CD8-positive, alpha-beta T cell (primary cell): ENCODE measurements at regions of chr2 and their contacts with region 1.

Region 1: DNA sequence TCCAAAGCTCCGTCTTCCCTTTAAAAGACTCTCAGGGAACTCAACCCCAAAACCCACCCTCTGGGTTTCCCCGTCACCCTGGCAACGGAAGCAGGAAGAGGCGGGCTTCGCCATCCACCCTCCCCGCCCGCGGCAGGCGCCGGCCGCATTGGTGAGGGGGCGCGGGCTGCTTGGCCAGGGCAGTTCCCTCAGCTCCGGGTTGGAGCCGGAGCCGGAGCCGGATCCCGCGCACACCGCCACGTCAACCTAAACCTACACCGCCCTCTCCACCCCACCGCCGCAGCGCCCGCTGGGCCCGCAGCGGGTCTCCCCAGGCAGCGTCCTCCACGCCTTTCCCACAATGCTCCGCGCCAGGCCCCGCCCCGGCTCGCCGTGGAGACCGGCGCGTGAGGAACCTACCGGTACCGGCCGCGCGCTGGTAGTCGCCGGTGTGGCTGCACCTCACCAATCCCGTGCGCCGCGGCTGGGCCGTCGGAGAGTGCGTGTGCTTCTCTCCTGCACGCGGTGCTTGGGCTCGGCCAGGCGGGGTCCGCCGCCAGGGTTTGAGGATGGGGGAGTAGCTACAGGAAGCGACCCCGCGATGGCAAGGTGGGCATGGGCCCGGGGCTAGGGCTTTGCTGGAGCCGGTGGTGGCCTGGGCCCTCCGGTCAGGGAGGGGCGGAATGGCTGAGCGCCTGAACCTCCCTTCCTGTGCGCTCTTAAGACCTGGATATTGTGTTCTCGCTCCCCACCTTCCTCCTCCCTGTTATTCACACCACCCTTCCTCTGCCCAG is at the start of gene DNAJC10:
- DNase-seq: peak; percentile 66 to 93 (median 85)
- ATAC-seq: peak; percentile 81
- H3K4me3 ChIP-seq: peak within 1 kb of the TSS; percentile 70 to 85
- H3K4me3 Mint-ChIP-seq: no peak within 1 kb of the TSS
- H3K27ac ChIP-seq: peak within 1 kb of the TSS; percentile 59 to 65
- H3K27ac Mint-ChIP-seq: no peak within 1 kb of the TSS
- H3K4me1 ChIP-seq: peaks cover 21% of the 10 kb centered on the region
- H3K4me1 Mint-ChIP-seq: peaks cover 3% of the 10 kb centered on the region
- H3K27me3 ChIP-seq: no peaks in the 10 kb centered on the region
- H3K27me3 Mint-ChIP-seq: peaks cover 5% of the 10 kb centered on the region
- CTCF ChIP-seq: no peak
- total RNA-seq, gene DNAJC10: 27.5 to 27.9 TPM

Region 2: DNA sequence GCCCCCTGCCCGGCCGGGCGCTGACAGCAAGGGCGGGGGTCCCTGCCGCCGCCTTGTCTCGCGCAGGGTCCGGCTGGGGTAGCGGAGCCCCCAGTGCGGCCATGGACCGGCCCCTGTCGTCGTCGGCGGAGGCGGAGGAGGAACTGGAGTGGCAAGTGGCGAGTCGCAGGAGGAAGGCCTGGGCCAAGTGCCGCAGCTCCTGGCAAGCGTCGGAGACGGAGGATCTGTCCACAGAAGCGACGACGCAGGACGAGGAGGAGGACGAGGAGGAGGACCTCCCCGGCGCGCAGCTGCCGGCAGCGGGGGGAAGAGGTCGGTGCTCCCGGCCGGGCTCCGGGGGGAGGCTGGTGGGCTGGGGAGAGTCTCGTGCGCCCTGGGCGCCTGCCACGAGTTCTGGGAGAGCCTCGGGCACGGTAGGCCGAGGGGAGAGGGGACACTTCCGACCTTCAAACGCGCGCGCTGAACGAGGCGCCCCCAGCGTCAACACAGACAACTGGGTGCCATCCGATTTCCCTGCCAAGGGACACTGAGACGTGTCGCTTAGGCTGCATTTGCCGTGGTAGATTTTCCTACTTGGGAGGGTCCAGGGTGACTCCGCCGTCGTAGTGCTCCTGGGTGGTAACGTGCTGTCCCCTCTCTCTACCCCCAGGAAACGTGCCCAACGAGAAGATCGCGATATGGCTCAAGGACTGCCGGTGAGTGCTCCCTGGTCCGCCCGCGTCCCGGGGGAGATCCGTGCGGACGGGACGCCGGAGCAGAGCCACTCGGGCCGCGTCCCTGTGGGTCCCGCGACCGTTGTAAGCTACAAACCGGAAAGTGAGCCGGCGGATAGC is 823.9 kb before region 1 on chr2:
- CTCF ChIA-PET with region 1: no interaction called
- POLR2A ChIA-PET with region 1: no interaction called
- intact Hi-C with region 1: loop called (anchors 2 to 10 kb)
- DNase-seq: peak; percentile 26 to 77 (median 61)
- ATAC-seq: peak; percentile 63
- H3K4me3 ChIP-seq: peak overlapping the region; percentile 80 to 85
- H3K4me3 Mint-ChIP-seq: peak overlapping the region; percentile 92
- H3K27ac ChIP-seq: peak overlapping the region; percentile 53 to 55
- H3K27ac Mint-ChIP-seq: peak overlapping the region; percentile 86
- H3K4me1 ChIP-seq: peaks cover 19% of the 10 kb centered on the region
- H3K4me1 Mint-ChIP-seq: peaks cover 39% of the 10 kb centered on the region
- H3K27me3 ChIP-seq: peaks cover 0 to 3% of the 10 kb centered on the region in 2 experiments
- H3K27me3 Mint-ChIP-seq: peaks cover 12% of the 10 kb centered on the region
- CTCF ChIP-seq: peak; percentile 14

Region 3: DNA sequence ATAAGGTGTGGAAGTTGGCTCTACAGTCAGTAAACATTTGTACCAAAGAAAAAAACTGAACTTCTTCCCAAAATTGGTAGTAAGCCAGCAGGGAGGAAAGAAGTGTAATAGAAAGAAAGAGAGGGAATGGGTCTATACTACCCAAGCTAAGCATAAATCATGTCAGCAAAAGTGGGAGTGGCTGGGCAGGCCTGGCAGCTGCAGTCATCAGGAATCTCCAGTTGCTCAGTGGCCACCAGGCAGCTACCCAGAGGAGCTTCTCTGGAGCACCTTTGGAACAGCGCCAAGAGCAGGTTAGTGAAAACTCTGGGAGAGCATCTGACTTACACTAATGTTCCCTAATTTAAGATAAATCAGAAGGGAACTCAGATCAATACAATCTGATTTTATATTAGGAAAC is 136.0 kb after region 1 on chr2:
- CTCF ChIA-PET with region 1: no interaction called
- POLR2A ChIA-PET with region 1: no interaction called
- intact Hi-C with region 1: no loop called
- DNase-seq: no peak
- ATAC-seq: no peak
- H3K4me3 ChIP-seq: no peak overlapping the region
- H3K4me3 Mint-ChIP-seq: no peak overlapping the region
- H3K27ac ChIP-seq: no peak overlapping the region
- H3K27ac Mint-ChIP-seq: no peak overlapping the region
- H3K4me1 ChIP-seq: no peaks in the 10 kb centered on the region
- H3K4me1 Mint-ChIP-seq: no peaks in the 10 kb centered on the region
- H3K27me3 ChIP-seq: no peaks in the 10 kb centered on the region
- H3K27me3 Mint-ChIP-seq: peaks cover 11% of the 10 kb centered on the region
- CTCF ChIP-seq: no peak

Region 4: DNA sequence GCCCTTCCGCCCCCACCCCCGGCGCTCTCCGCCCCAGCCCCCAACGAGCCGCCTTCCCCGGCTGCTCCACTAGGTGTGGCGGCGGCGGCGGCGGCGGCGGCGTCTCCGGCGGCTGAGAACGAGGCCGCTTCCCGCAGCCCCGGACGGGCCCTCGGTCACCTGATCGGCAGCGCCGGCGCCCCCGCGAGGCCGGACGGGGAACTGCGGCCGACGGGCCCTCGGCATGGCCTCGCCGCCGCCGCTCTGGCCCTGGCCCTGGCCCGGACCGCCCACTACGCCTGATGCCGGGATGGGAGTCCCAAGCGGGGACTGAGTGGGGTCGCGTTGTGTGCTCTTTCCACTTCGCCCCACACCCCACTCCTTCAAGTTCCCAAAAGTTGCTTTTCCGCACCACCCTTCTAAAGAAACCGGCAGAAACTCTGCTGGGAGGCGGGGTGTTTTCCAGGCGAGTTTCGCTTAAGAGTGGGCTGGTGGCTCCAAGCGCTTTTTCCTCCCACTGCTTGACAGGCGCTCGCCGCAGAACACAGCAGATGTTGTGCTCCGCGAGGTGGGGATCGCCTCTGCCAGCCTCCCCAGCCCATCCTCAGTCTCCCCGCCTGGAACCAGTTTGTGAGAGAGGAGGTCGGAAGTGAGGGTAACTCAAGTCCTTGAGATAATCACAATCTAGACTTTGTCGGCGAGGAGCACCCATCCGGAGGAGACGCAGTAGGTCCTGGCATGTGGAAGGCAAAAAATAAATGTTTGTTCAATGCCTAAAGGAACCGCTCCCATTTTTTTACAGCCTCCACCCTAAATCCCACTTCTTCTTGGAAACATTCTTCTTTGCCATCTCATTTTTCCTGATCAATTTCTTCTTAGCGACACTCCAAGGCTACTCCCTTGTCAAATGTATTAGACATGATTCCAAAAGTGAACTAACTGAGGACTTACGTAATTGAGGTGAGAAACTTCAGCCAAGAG is 322.5 kb after region 1 on chr2 and contains the start of gene NCKAP1:
- CTCF ChIA-PET with region 1: no interaction called
- POLR2A ChIA-PET with region 1: no interaction called
- intact Hi-C with region 1: loop called in 1 of 2 experiments (anchors 5 kb)
- DNase-seq: peak; percentile 63 to 89 (median 78)
- ATAC-seq: peak; percentile 85
- H3K4me3 ChIP-seq: peak within 1 kb of the TSS; percentile 52 to 54
- H3K4me3 Mint-ChIP-seq: peak within 1 kb of the TSS; percentile 80
- H3K27ac ChIP-seq: no peak within 1 kb of the TSS
- H3K27ac Mint-ChIP-seq: peak within 1 kb of the TSS; percentile 41
- H3K4me1 ChIP-seq: peaks cover 29% of the 10 kb centered on the region
- H3K4me1 Mint-ChIP-seq: peaks cover 30% of the 10 kb centered on the region
- H3K27me3 ChIP-seq: peaks cover 10 to 11% of the 10 kb centered on the region in 2 experiments
- H3K27me3 Mint-ChIP-seq: peaks cover 51% of the 10 kb centered on the region
- CTCF ChIP-seq: peak; percentile 74
- total RNA-seq, gene NCKAP1: 0.81 to 1.4 TPM